Mammary epithelial cell (primary cell): ENCODE measurements at regions of chr20 and their contacts with region 1.

Region 1: DNA sequence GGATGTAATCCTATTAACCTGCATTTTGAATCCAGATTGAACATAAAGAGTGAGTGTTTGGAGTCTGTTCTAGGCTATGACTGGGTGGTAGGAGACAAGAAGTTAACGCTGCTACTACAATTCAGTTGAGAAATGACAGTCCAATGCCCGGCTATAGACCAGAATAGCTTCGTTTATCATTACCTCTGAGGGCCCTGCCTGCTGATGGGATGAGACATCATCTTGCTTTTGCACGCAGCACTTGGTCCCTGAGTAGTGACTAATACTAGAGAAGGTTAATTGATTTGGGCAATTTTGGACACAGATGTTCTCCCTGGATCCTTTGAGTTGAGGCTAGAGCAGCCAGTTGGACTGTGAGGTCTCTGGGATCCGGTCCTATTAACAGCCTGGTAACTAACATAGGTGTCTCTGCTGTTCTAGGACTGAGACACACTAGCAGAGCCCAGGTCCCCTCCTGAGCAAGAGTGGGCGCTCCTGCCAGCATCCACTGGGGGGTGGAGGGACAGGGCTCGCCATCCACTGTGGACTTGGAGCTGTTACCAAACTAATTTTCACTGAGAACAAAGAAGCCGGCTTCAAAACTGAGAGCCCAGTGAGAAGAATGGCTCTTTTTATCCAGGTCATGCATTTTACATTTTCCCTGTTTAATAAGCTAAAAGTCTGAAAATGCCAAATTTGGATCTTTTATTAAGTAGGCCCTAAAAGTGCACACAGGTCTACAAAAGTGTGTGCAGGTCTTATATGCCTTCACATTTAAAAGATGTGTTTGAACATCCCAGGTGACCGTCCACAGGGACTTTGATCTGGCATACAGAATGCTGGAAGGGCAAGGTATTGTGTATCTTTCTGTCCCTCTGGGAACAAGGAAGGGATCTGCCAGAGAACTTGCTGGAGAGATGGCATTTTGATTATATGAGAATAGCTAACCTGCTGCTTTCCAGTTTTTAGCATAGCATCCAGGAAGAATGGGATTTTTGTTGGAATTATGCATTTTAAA is 212.5 kb downstream of the CDH4 start:
- DNase-seq: no peak
- H3K4me3 ChIP-seq: no peak overlapping the region
- H3K27ac ChIP-seq: no peak overlapping the region
- H3K4me1 ChIP-seq: no peaks in the 10 kb centered on the region
- H3K27me3 ChIP-seq: no peaks in the 10 kb centered on the region
- CTCF ChIP-seq: no peak

Region 2: GRCh38 chr20:61422653-61423443 is 41.8 kb before region 1 on chr20:
- CTCF ChIA-PET with region 1: no interaction called
- dilution Hi-C with region 1: loop called (anchors 5 kb)
- in situ Hi-C with region 1: no loop called
- intact Hi-C with region 1: no loop called
- DNase-seq: no peak
- H3K4me3 ChIP-seq: no peak overlapping the region
- H3K27ac ChIP-seq: no peak overlapping the region
- H3K4me1 ChIP-seq: no peaks in the 10 kb centered on the region
- H3K27me3 ChIP-seq: no peaks in the 10 kb centered on the region
- CTCF ChIP-seq: no peak